Vagina (tissue), 2 donors: ENCODE measurements at regions of chr16 and their contacts with region 1.

Region 1: GRCh38 chr16:10509534-10510025 is 70.8 kb downstream of the EMP2 start:
- DNase-seq: no peak
- H3K4me3 ChIP-seq: no peak overlapping the region
- H3K27ac ChIP-seq: no peak overlapping the region
- H3K4me1 ChIP-seq: peaks cover 6% of the 10 kb centered on the region
- H3K27me3 ChIP-seq: no peaks in the 10 kb centered on the region
- CTCF ChIP-seq: peak; percentile 64 to 74 (median 70)
- POLR2A ChIP-seq: no peak

Region 2: GRCh38 chr16:10256784-10257641 is 252.6 kb before region 1 on chr16:
- intact Hi-C with region 1: loop called (anchors 10 kb)
- DNase-seq: no peak
- H3K4me3 ChIP-seq: no peak overlapping the region
- H3K27ac ChIP-seq: no peak overlapping the region
- H3K4me1 ChIP-seq: no peaks in the 10 kb centered on the region
- H3K27me3 ChIP-seq: no peaks in the 10 kb centered on the region
- CTCF ChIP-seq: peak; percentile 23 to 66 (median 60)
- POLR2A ChIP-seq: no peak